Naive thymus-derived CD4-positive, alpha-beta T cell (primary cell): ENCODE measurements at regions of chr1 and their contacts with region 1.

Region 1: DNA sequence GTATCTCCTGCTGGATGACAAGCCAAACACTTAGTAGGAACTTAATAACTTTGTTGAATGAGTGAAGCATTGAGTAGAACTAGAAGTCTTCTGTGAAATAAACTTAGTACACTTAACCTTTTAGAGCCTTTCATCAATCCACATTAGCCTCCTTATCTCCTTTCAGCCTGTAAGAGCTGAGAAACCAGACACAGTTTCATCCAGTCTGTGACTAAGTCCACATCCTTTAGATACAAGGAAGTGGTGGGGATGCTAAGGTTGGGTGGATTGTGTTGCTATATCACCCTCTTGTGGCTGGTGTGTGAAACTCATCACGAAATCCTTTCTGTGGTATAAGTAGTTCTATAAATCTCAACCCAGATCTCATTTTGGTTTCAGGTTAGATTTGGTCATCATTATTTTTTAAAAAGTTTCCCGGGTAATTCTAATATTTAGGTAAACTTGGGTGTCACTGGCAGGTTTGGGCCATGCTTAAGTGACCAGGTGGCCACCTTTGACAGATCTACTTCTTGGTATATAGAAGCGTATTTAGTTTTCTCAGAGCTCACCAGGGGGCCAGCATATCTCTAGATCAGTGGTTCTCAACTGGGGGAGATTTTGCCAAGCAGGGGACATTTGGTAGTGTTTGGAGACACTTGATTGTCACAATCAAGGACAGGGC is 27.8 kb upstream of the CD84 start:
- DNase-seq: peak in 7 of 9 donors; percentile 71 to 85 (median 80)
- ATAC-seq: peak; percentile 99
- H3K4me3 ChIP-seq: no peak overlapping the region
- H3K4me3 Mint-ChIP-seq: peak overlapping the region in 8 of 10 donors; percentile 30 to 60 (median 53)
- H3K27ac ChIP-seq: no peak overlapping the region
- H3K27ac Mint-ChIP-seq: peak overlapping the region; percentile 52 to 85 (median 81)
- H3K4me1 ChIP-seq: peaks cover 6 to 15% of the 10 kb centered on the region in 2 donors
- H3K4me1 Mint-ChIP-seq: peaks cover 22 to 60% (median 39%) of the 10 kb centered on the region in 7 donors
- H3K27me3 ChIP-seq: no peaks in the 10 kb centered on the region
- H3K27me3 Mint-ChIP-seq: no peaks in the 10 kb centered on the region

Region 2: GRCh38 chr1:160098852-160099561 is 508.1 kb before region 1 on chr1:
- CTCF ChIA-PET with region 1: no interaction called
- POLR2A ChIA-PET with region 1: no interaction called
- intact Hi-C with region 1: loop called (anchors 5 to 10 kb)
- DNase-seq: peak; percentile 94 to 98 (median 96)
- ATAC-seq: peak; percentile 90
- H3K4me3 ChIP-seq: peak overlapping the region; percentile 85
- H3K4me3 Mint-ChIP-seq: peak overlapping the region; percentile 74 to 95 (median 86)
- H3K27ac ChIP-seq: peak overlapping the region; percentile 96
- H3K27ac Mint-ChIP-seq: peak overlapping the region; percentile 88 to 99 (median 97)
- H3K4me1 ChIP-seq: peaks cover 28 to 49% of the 10 kb centered on the region in 2 donors
- H3K4me1 Mint-ChIP-seq: peaks cover 36 to 84% (median 64%) of the 10 kb centered on the region in 7 donors
- H3K27me3 ChIP-seq: no peaks in the 10 kb centered on the region
- H3K27me3 Mint-ChIP-seq: no peaks in the 10 kb centered on the region

Region 3: GRCh38 chr1:160342953-160343869 is 263.9 kb before region 1 on chr1 and contains the starts of genes COPA and NCSTN:
- CTCF ChIA-PET with region 1: no interaction called
- POLR2A ChIA-PET with region 1: no interaction called
- intact Hi-C with region 1: loop called (anchors 1 kb)
- DNase-seq: peak; percentile 67 to 93 (median 86)
- ATAC-seq: peak; percentile 98
- H3K4me3 ChIP-seq: peak within 1 kb of the TSS; percentile 87
- H3K4me3 Mint-ChIP-seq: peak within 1 kb of the TSS; percentile 99 to 100 (median 100)
- H3K27ac ChIP-seq: peak within 1 kb of the TSS; percentile 98
- H3K27ac Mint-ChIP-seq: peak within 1 kb of the TSS; percentile 98 to 100 (median 100)
- H3K4me1 ChIP-seq: peaks cover 23 to 29% of the 10 kb centered on the region in 2 donors
- H3K4me1 Mint-ChIP-seq: peaks cover 32 to 78% (median 66%) of the 10 kb centered on the region in 7 donors
- H3K27me3 ChIP-seq: no peaks in the 10 kb centered on the region
- H3K27me3 Mint-ChIP-seq: no peaks in the 10 kb centered on the region
- total RNA-seq, gene COPA: 104 to 151 (median 118) TPM
- total RNA-seq, gene NCSTN: 68.4 to 91.1 (median 73.5) TPM

Region 4: GRCh38 chr1:160428655-160429054 is 178.5 kb before region 1 on chr1:
- CTCF ChIA-PET with region 1: interaction called, 63 read pairs
- POLR2A ChIA-PET with region 1: interaction called, 17 read pairs
- intact Hi-C with region 1: loop called (anchors 1 kb)
- DNase-seq: peak in 6 of 9 donors; percentile 35 to 61 (median 47)
- ATAC-seq: peak; percentile 54
- H3K4me3 ChIP-seq: no peak overlapping the region
- H3K4me3 Mint-ChIP-seq: peak overlapping the region; percentile 3 to 74 (median 62)
- H3K27ac ChIP-seq: peak overlapping the region; percentile 68
- H3K27ac Mint-ChIP-seq: peak overlapping the region; percentile 84 to 99 (median 91)
- H3K4me1 ChIP-seq: peaks cover 55 to 56% of the 10 kb centered on the region in 2 donors
- H3K4me1 Mint-ChIP-seq: peaks cover 32 to 77% (median 68%) of the 10 kb centered on the region in 7 donors
- H3K27me3 ChIP-seq: no peaks in the 10 kb centered on the region
- H3K27me3 Mint-ChIP-seq: no peaks in the 10 kb centered on the region

Region 5: DNA sequence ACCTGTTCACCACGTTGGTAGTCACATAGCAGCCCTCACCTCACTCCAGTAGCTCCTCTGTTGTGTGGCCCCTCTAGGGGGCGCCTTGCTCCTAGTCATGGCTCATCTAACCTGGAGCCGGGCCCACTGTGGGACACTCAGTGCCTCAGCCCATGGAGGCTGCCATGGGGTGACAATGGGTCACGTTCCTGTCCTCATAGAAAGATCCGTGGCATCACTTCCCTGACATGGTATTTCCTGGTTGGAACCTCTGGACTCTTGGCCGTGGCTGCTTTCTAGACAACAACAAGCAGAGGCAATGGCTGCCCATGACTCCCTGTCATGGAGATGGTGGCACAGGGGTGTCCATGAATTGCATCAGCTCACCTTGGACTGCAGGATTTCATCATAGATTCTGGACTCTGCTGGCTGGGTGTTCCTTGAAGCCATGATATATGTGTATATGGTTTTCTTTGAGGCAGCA is 56.5 kb before region 1 on chr1:
- CTCF ChIA-PET with region 1: interaction called, 35 read pairs
- POLR2A ChIA-PET with region 1: interaction called, 4 read pairs
- intact Hi-C with region 1: loop called (anchors 1 kb)
- DNase-seq: peak in 5 of 9 donors; percentile 25 to 53 (median 40)
- ATAC-seq: peak; percentile 64
- H3K4me3 ChIP-seq: no peak overlapping the region
- H3K4me3 Mint-ChIP-seq: no peak overlapping the region
- H3K27ac ChIP-seq: no peak overlapping the region
- H3K27ac Mint-ChIP-seq: peak overlapping the region in 3 of 9 donors; percentile 29 to 69 (median 65)
- H3K4me1 ChIP-seq: peaks cover 2 to 5% of the 10 kb centered on the region in 2 donors
- H3K4me1 Mint-ChIP-seq: peaks cover 6 to 23% (median 17%) of the 10 kb centered on the region in 7 donors
- H3K27me3 ChIP-seq: no peaks in the 10 kb centered on the region
- H3K27me3 Mint-ChIP-seq: no peaks in the 10 kb centered on the region

Region 6: GRCh38 chr1:160584784-160585183 is 22.4 kb before region 1 on chr1:
- CTCF ChIA-PET with region 1: interaction called, 12 read pairs
- POLR2A ChIA-PET with region 1: interaction called, 3 read pairs
- intact Hi-C with region 1: no loop called
- DNase-seq: no peak
- ATAC-seq: no peak
- H3K4me3 ChIP-seq: no peak overlapping the region
- H3K4me3 Mint-ChIP-seq: peak overlapping the region in 1 of 10 donors; percentile 10
- H3K27ac ChIP-seq: no peak overlapping the region
- H3K27ac Mint-ChIP-seq: peak overlapping the region in 2 of 9 donors; percentile 17 to 28
- H3K4me1 ChIP-seq: peaks cover 19 to 39% of the 10 kb centered on the region in 2 donors
- H3K4me1 Mint-ChIP-seq: peaks cover 29 to 54% (median 43%) of the 10 kb centered on the region in 7 donors
- H3K27me3 ChIP-seq: no peaks in the 10 kb centered on the region
- H3K27me3 Mint-ChIP-seq: no peaks in the 10 kb centered on the region

Region 7: GRCh38 chr1:160675641-160676410 is 68.7 kb after region 1 on chr1:
- CTCF ChIA-PET with region 1: interaction called, 13 read pairs
- POLR2A ChIA-PET with region 1: interaction called, 3 read pairs
- intact Hi-C with region 1: no loop called
- DNase-seq: peak; percentile 52 to 74 (median 67)
- ATAC-seq: peak; percentile 92
- H3K4me3 ChIP-seq: no peak overlapping the region
- H3K4me3 Mint-ChIP-seq: peak overlapping the region in 7 of 10 donors; percentile 23 to 54 (median 39)
- H3K27ac ChIP-seq: peak overlapping the region; percentile 56
- H3K27ac Mint-ChIP-seq: peak overlapping the region in 3 of 9 donors; percentile 69 to 93 (median 88)
- H3K4me1 ChIP-seq: peaks cover 26 to 41% of the 10 kb centered on the region in 2 donors
- H3K4me1 Mint-ChIP-seq: peaks cover under 1 to 47% (median 8%) of the 10 kb centered on the region in 7 donors
- H3K27me3 ChIP-seq: no peaks in the 10 kb centered on the region
- H3K27me3 Mint-ChIP-seq: no peaks in the 10 kb centered on the region